PC-3 (cell line): ENCODE measurements at regions of chr3 and their contacts with region 1.

Region 1: GRCh38 chr3:48125026-48125705 is 63.1 kb downstream of the CDC25A start:
- DNase-seq: no peak
- ATAC-seq: no peak
- H3K4me3 ChIP-seq: no peak overlapping the region
- H3K27ac ChIP-seq: no peak overlapping the region
- H3K4me1 ChIP-seq: no peaks in the 10 kb centered on the region
- H3K27me3 ChIP-seq: no peaks in the 10 kb centered on the region
- CTCF ChIP-seq: no peak

Region 2: GRCh38 chr3:48107227-48107626 is 17.9 kb before region 1 on chr3:
- CTCF ChIA-PET with region 1: no interaction called
- POLR2A ChIA-PET with region 1: interaction called, 11 read pairs
- intact Hi-C with region 1: no loop called
- DNase-seq: no peak
- ATAC-seq: no peak
- H3K4me3 ChIP-seq: no peak overlapping the region
- H3K27ac ChIP-seq: no peak overlapping the region
- H3K4me1 ChIP-seq: no peaks in the 10 kb centered on the region
- H3K27me3 ChIP-seq: no peaks in the 10 kb centered on the region
- CTCF ChIP-seq: no peak

Region 3: DNA sequence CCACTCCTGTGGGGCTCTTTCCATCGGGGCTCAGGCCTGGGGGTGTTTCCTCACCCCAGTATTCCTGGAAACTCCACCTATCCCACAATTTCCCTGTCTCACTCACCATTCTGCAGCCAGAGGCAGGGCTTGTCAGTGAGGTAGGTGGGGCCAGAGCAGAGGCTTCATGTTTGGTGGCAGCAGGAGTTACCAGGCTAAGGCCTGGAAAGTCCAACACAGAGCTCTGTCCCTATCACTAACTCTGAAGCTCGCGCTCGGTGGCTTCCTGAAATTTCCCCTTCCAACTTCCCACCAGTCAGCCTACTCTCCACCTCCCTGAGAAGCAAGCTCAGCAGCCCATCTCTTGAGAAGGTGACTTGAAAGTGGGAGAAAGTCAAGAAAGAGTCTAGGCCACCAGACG is 18.8 kb after region 1 on chr3:
- CTCF ChIA-PET with region 1: interaction called, 17 read pairs
- POLR2A ChIA-PET with region 1: no interaction called
- intact Hi-C with region 1: no loop called
- DNase-seq: no peak
- ATAC-seq: no peak
- H3K4me3 ChIP-seq: no peak overlapping the region
- H3K27ac ChIP-seq: no peak overlapping the region
- H3K4me1 ChIP-seq: no peaks in the 10 kb centered on the region
- H3K27me3 ChIP-seq: no peaks in the 10 kb centered on the region
- CTCF ChIP-seq: no peak